HCT116 (cell line): ENCODE measurements at regions of chr2 and their contacts with region 1.

Region 1: DNA sequence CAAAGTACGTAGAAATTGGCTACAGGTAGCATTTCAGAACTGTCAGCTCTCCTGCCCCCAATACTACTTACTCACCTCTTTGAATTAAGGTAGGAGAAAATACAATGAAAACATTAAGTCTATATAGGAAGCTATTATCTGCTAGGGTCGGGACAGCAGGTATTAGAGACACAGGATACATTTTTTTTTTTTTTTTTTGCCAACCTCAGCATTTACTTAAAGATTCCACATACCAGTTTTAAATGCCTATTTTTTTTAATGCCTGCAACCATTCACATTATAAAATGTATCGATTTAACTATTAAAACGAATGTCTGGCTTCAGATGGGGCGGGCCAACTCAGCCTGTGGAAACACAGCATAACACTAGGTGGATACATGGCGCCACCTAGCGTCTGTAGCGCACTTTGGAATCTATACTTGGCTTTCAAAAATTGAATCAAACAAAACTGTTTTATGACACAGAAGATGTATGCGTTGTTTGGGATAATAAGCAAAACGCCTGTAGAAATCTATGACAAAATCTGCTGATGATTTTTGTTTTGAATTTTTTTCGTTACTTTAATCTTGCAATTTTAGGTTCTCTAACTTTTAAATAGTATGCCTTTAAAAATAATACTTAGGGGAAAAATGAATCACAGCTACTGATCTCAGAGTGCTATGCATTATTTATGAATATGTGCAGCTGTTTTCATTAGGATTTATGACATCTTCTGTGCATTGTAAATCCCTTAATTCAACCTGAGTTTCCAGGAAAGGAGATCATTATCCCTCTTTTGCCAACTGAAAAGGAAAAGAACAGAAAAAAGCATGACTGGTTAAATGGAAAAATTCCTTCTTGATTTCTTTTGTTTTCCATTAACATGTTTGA is 261.0 kb downstream of the NYAP2 start:
- DNase-seq: peak; percentile 50
- ATAC-seq: peak; percentile 84
- H3K4me3 ChIP-seq: no peak overlapping the region
- H3K27ac ChIP-seq: no peak overlapping the region
- H3K4me1 ChIP-seq: no peaks in the 10 kb centered on the region; a peak in 1 of 4 replicates
- H3K27me3 ChIP-seq: no peaks in the 10 kb centered on the region
- CTCF ChIP-seq: peak; percentile 84 to 96 (median 87)
- POLR2A ChIP-seq: no peak
- RAD21 ChIP-seq: peak; percentile 95

Region 2: GRCh38 chr2:224930990-224931389 is 729.5 kb before region 1 on chr2:
- CTCF ChIA-PET with region 1: no interaction called
- POLR2A ChIA-PET with region 1: no interaction called
- RAD21 ChIA-PET with region 1: no interaction called
- intact Hi-C with region 1: loop called (anchors 1 kb)
- DNase-seq: no peak
- ATAC-seq: peak; percentile 47
- H3K4me3 ChIP-seq: no peak overlapping the region
- H3K27ac ChIP-seq: no peak overlapping the region
- H3K4me1 ChIP-seq: no peaks in the 10 kb centered on the region
- H3K27me3 ChIP-seq: no peaks in the 10 kb centered on the region
- CTCF ChIP-seq: peak in 2 of 3 experiments; percentile 37 to 46; a peak in 3 of 6 replicates
- POLR2A ChIP-seq: no peak
- RAD21 ChIP-seq: peak; percentile 55

Region 3: DNA sequence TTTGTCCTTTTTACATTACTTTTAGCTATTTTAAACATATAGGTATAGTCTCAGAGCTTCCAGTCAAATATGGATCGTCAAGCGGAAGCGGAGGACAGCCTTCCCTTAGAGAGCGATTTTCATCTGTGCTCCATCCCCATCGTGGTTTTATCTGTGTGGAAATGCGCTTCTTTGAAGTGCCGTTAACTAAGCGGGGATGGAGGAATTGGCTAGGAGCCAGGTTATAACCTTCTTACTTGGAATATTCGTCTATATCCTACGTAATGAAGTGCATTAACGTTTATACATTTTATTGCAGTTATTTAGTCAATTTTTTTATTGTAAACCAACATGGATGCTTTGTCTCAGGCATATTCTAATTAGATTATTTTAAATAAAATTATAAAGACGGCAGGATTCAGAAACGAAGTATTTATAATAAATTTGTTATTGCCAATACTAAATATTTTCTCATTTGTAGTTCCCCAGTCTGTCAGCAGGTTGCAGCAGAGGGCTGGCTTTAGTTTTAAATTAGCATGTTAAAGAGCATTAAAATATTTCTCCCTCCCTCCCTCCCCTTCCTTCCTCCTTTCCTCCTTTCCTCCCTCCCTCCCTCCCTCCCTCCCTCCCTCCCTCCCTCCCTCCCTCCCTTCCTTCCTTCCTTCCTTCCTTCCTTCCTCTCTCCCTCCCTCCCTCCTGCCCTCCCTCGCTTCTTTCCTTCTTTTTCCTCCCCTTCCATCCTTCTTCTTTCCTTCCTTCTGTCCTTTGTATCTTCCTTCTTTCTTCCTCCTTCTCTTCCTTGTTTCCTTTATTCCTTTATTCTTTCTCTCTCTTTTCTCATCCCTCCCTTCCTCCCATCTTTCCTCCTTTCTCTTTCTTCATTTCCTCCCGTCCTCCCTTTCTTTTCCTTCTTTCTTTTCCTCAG is 537.7 kb before region 1 on chr2:
- CTCF ChIA-PET with region 1: interaction called, 7 read pairs
- POLR2A ChIA-PET with region 1: no interaction called
- RAD21 ChIA-PET with region 1: no interaction called
- intact Hi-C with region 1: loop called (anchors 1 kb)
- DNase-seq: no peak
- ATAC-seq: peak; percentile 60; the same call in 1 of the 2 replicates
- H3K4me3 ChIP-seq: no peak overlapping the region
- H3K27ac ChIP-seq: no peak overlapping the region
- H3K4me1 ChIP-seq: peaks cover 0 to 11% of the 10 kb centered on the region in 2 experiments; a peak in 2 of 4 replicates
- H3K27me3 ChIP-seq: no peaks in the 10 kb centered on the region
- CTCF ChIP-seq: peak in 2 of 3 experiments; percentile 38 to 39; a peak in 4 of 6 replicates
- POLR2A ChIP-seq: no peak
- RAD21 ChIP-seq: peak; percentile 62

Region 4: DNA sequence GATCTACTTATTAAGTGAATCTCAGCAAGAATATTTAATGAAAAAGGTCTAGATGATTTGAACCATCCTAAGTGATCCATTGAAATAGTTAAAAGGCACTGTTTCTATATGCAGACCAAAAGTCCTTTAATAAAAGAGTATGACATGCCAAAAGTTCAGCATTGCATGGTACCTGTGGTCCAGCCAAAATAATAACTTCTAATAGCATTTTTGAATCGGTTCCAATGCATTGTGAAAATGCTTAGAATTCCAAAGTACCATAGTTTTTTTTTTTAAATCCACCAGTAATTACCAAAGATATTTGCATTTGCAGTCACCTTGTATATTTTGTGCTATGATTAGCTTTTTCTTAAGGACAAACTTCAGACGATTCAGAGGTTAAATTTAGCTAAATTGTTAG is 181.1 kb before region 1 on chr2:
- CTCF ChIA-PET with region 1: no interaction called
- POLR2A ChIA-PET with region 1: no interaction called
- RAD21 ChIA-PET with region 1: no interaction called
- intact Hi-C with region 1: no loop called
- DNase-seq: no peak
- ATAC-seq: no peak
- H3K4me3 ChIP-seq: no peak overlapping the region
- H3K27ac ChIP-seq: no peak overlapping the region
- H3K4me1 ChIP-seq: no peaks in the 10 kb centered on the region
- H3K27me3 ChIP-seq: no peaks in the 10 kb centered on the region
- CTCF ChIP-seq: no peak
- POLR2A ChIP-seq: no peak
- RAD21 ChIP-seq: no peak

Region 5: GRCh38 chr2:226560325-226560724 is 899.8 kb after region 1 on chr2:
- CTCF ChIA-PET with region 1: no interaction called
- POLR2A ChIA-PET with region 1: no interaction called
- RAD21 ChIA-PET with region 1: interaction called in 1 of 2 experiments, 13 read pairs
- intact Hi-C with region 1: no loop called
- DNase-seq: no peak
- ATAC-seq: no peak
- H3K4me3 ChIP-seq: no peak overlapping the region
- H3K27ac ChIP-seq: no peak overlapping the region
- H3K4me1 ChIP-seq: peaks cover 6 to 14% of the 10 kb centered on the region in 2 experiments; a peak in 1 of 4 replicates
- H3K27me3 ChIP-seq: no peaks in the 10 kb centered on the region
- CTCF ChIP-seq: no peak
- POLR2A ChIP-seq: no peak
- RAD21 ChIP-seq: no peak